ENCODE measurements at regions of chr7 and their contacts with region 1.

Region 1: GRCh38 chr7:4744391-4745264 is 30.8 kb upstream of the AP5Z1 start:
- DNase-seq: peak; percentile 41 to 58 (median 50)
- H3K4me3 ChIP-seq: peak overlapping the region; percentile 40 to 77 (median 62)
- H3K4me3 Mint-ChIP-seq: peak overlapping the region; percentile 76 to 88
- H3K27ac ChIP-seq: peak overlapping the region; percentile 77 to 95
- H3K27ac Mint-ChIP-seq: peak overlapping the region; percentile 93 to 97 (median 97)
- H3K4me1 ChIP-seq: peaks cover 40 to 43% of the 10 kb centered on the region in 2 donors
- H3K4me1 Mint-ChIP-seq: peaks cover 44% of the 10 kb centered on the region
- H3K27me3 ChIP-seq: no peaks in the 10 kb centered on the region
- H3K27me3 Mint-ChIP-seq: peaks cover 0 to 2% (median 0%) of the 10 kb centered on the region in 3 donors
- CTCF ChIP-seq: no peak

Region 2: GRCh38 chr7:4519819-4520525 is 224.7 kb before region 1 on chr7:
- intact Hi-C with region 1: no loop called
- DNase-seq: no peak
- H3K4me3 ChIP-seq: no peak overlapping the region
- H3K4me3 Mint-ChIP-seq: no peak overlapping the region
- H3K27ac ChIP-seq: no peak overlapping the region
- H3K27ac Mint-ChIP-seq: no peak overlapping the region
- H3K4me1 ChIP-seq: no peaks in the 10 kb centered on the region
- H3K4me1 Mint-ChIP-seq: no peaks in the 10 kb centered on the region
- H3K27me3 ChIP-seq: no peaks in the 10 kb centered on the region
- H3K27me3 Mint-ChIP-seq: peaks cover 0 to 3% (median 0%) of the 10 kb centered on the region in 3 donors
- CTCF ChIP-seq: no peak

Region 3: DNA sequence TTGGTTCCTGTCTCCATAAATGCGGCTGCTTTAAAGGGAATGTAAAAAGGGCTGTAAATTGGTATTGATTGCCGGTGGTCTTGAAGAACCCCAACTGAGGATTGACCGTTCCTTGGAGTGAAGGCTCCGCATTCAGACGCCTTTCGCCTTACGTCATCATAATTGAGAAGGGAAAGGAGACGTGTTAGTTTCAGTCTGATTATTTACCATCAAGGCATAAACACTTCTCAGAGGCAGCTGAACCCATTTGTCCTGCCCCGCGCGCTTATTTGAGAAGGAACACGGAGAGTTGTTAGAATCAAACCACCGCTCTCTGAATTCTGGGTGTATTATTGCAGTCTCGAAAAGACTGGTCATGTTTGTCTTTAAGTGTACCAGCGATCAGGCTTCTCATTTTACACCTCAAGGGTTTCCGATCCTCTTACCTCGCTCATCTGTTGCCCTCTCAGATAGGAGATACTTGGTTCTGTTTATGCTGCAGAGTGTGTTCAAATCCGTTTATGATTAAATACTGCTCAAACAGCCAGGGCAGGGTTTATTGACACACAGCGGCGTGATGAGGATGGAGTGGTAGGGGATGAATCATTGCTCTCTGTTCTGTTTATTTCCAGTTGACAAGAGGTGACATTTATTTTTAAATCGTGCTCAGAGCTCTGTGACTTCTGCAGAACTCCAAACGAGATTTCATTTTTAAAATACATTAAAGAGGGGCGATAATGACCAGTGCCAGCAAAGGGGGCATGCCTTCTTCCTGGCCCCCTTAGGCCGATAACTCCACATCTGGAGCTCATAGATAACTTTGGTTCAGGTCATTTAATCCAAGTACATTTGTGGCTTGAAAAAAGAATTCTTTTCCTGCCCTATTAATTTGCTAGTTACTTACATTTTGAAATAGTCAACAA is 32.1 kb before region 1 on chr7:
- intact Hi-C with region 1: loop called in 1 of 2 experiments (anchors 5 kb)
- DNase-seq: peak; percentile 70 to 75 (median 75)
- H3K4me3 ChIP-seq: peak overlapping the region in 1 of 3 experiments; percentile 68
- H3K4me3 Mint-ChIP-seq: peak overlapping the region; percentile 70 to 83
- H3K27ac ChIP-seq: peak overlapping the region; percentile 68 to 84
- H3K27ac Mint-ChIP-seq: peak overlapping the region; percentile 86 to 96 (median 93)
- H3K4me1 ChIP-seq: peaks cover 68 to 71% of the 10 kb centered on the region in 2 donors
- H3K4me1 Mint-ChIP-seq: peaks cover 80% of the 10 kb centered on the region
- H3K27me3 ChIP-seq: no peaks in the 10 kb centered on the region
- H3K27me3 Mint-ChIP-seq: peaks cover 0 to 5% (median 2%) of the 10 kb centered on the region in 3 donors
- CTCF ChIP-seq: no peak

Region 4: DNA sequence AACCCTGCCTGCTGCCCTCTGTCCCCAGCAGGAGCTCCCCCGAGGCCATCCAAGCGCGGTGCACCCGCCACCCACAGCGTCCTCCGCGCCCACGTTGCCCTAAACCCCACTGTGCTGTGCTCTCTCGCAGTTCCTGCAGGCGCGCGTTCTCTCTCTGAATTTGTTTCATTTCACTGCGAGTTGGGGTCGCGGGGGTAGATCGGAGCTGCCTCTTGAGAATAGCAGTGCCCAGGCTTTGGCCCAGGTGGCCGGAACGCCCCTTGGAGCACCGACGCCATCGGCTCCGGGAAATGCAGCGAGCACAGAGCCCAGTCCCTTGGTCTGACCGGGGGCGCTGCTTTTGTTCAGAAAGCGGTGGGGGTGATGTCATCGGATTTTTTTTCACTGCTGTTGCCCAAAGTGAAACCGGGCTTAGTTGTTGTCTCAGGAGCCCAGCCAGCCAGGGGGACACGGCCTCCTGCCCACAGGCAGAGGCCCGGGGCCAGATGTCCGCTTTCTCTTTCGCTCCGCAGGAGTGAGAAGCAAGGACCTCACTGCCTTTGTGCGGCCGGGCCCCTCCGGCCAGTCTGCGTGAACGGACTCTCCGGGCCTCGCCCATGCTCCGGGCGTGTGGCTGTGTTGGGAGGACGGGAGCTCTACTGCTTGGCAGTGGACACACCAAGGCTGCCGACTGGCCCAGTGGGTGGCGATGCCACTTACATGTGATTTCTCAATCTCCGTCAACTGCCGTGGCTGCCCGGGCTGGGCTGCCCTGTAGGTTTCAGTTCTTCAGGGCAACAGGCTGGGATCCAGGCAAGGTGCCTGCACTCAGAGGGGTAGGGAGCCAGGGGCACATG is 19.4 kb before region 1 on chr7:
- intact Hi-C with region 1: loop called (anchors 2 kb)
- DNase-seq: peak; percentile 71 to 80 (median 73)
- H3K4me3 ChIP-seq: peak overlapping the region; percentile 53 to 74 (median 69)
- H3K4me3 Mint-ChIP-seq: peak overlapping the region; percentile 96
- H3K27ac ChIP-seq: peak overlapping the region; percentile 87 to 88
- H3K27ac Mint-ChIP-seq: peak overlapping the region; percentile 93 to 98 (median 97)
- H3K4me1 ChIP-seq: peaks cover 29 to 49% of the 10 kb centered on the region in 2 donors
- H3K4me1 Mint-ChIP-seq: peaks cover 44% of the 10 kb centered on the region
- H3K27me3 ChIP-seq: no peaks in the 10 kb centered on the region
- H3K27me3 Mint-ChIP-seq: no peaks in the 10 kb centered on the region
- CTCF ChIP-seq: no peak

Region 5: GRCh38 chr7:4931943-4932342 is 187.3 kb after region 1 on chr7:
- intact Hi-C with region 1: no loop called
- DNase-seq: no peak
- H3K4me3 ChIP-seq: no peak overlapping the region
- H3K4me3 Mint-ChIP-seq: no peak overlapping the region
- H3K27ac ChIP-seq: no peak overlapping the region
- H3K27ac Mint-ChIP-seq: no peak overlapping the region
- H3K4me1 ChIP-seq: no peaks in the 10 kb centered on the region
- H3K4me1 Mint-ChIP-seq: no peaks in the 10 kb centered on the region
- H3K27me3 ChIP-seq: no peaks in the 10 kb centered on the region
- H3K27me3 Mint-ChIP-seq: peaks cover 7 to 12% (median 9%) of the 10 kb centered on the region in 3 donors
- CTCF ChIP-seq: no peak